Cardiac septum (tissue), 1 donor: ENCODE measurements at regions of chr16 and their contacts with region 1.

Region 1: DNA sequence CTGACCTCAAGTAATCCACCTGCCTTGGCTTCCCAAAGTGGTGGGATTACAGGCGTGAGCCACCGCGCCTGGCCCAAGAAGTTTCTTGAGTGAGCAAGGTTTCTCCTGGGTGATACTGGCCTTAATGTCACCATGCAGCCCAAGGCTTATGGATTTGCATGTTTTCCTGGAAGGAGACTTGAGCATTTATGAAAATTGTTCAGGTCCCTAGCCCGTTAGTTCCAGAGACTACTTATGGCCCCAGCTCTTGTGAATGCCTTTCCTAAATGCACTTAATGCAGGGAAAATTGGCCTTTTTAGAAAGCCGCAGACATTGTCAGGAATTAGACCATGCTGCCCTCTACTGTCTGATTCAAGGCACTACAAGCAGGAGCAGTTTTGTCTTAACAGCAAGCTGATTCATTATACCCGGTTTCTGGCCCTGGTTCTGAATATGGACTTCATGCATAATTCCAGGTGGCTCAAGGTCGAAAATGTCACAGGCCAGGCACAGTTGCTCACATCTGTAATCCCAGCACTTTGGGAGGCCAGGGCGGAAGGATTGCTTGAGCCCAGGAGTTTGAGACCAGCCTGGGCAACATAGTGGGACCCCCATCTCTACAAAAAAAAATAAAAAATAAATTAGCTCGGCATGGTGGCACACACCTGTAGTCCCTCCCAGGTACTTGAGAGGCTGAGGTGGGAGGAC is 91.3 kb downstream of the SNX29 start:
- DNase-seq: no peak

Region 2: DNA sequence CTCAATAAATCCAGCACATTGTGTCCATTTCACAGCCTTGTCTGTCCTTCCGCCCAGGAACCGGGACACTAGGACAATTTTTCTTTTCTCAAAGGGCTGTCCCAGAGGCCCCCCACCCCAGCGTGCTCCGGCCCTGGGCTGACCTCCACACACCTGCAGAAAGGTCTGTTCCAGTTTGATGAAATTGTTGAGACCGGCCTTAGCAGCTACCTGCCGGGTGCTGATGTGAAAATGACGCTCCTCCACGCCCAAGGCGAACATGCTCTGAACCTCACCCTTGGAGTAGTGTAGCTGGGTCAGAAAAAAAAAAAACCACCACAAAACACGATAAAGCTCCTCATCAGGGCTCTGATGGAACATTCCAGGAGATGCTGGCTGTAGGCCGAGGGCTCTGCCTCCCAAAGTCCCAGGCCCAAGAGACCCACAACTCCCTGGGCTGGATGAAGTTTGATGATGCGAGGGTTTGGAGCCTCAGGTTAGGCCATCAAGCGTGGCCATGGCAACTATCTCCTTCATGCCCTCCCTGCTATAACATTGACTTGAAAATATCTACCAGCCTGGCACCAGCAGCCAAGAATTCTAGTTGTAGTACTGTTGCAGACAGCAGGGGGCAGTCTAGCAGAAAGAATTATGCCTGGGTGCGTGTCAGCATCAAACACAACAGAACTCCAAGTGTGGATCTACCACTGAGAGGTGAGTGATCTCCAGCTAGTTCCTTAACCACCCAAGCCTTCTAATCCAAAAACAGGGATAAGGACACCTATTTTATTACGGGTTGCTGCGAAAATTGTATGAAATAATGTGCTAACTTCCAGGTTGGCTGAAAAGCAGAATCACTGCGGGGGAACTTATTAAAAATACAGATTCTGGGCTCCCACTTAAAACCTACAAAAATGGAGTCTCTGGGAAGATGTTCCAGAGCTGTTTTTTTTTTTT is 660.5 kb before region 1 on chr16:
- intact Hi-C with region 1: loop called (anchors 10 kb)
- DNase-seq: no peak

Region 3: DNA sequence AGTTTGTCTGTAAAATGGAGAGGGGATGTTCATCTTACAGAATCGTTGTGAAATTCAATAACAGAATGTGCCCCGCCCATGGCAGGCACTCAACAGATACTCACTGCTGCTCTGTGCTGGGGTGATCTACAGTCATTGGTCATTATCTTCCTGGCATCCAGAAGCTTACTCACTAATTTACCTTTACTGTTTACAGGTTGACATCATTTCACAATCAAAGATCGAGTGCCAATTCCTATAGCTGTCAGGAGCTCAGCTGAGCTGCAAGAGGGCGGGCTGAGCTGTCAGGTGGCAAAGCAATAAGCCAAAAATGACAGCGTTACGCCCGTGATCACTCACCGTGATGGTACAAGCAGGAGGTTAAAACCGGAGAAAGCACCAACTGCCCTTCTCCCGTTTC is 532.4 kb before region 1 on chr16:
- intact Hi-C with region 1: no loop called
- DNase-seq: no peak

Region 4: DNA sequence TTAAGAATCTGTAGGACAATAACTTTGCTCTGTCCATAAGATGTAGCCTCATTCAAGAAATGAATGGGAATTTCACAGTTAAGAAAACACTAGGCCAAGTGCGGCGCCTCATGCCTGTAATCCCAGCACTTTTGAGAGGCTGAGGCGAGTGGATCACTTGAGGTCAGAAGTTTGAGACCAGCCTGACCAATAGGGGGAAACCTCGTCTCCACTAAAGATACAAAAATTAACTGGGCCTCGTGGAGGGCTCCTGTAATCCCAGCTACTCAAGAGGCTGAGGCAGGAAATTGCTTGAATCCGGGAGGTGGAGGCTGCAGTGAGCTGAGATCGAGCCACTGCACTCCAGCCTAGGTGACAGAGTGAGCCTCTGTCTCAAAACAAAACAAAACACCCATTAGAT is 196.7 kb before region 1 on chr16:
- intact Hi-C with region 1: loop called (anchors 10 kb)
- DNase-seq: no peak

Region 5: GRCh38 chr16:11950388-11950787 is 117.5 kb before region 1 on chr16:
- intact Hi-C with region 1: loop called (anchors 5 kb)
- DNase-seq: no peak

Region 6: DNA sequence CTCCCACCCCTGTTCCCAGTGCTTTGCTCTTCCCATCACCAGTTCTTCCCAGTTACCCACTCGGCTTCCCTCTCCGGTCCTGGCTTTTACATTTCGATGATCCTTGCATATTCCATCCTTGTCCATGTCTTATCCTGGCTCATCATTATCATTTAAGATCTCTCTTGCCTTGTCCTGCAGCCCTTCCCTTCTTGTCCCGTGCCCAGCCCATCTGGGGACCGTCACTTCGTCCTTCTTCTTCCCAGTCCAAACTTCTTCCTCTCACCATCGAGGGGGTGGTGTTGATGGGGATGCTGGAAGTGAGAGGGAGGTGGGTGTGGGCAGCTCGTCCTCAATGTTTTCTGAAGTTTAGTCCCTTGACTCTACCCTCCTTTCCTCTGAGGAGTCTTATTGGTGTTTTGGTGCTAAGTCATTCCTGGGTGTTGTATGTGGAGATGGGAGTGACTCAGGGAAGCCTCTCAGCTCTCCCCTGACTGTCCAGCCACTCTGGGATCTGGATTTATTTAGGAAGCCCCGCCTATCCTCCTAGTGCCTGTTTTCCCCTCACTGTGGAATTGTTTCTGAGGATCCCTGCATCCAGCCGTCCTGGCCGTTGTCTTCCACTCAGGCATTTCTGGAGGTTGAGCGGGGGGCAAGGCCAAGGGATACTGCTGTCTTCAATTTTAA is 90.3 kb before region 1 on chr16:
- intact Hi-C with region 1: loop called (anchors 5 kb)
- DNase-seq: no peak

Region 7: DNA sequence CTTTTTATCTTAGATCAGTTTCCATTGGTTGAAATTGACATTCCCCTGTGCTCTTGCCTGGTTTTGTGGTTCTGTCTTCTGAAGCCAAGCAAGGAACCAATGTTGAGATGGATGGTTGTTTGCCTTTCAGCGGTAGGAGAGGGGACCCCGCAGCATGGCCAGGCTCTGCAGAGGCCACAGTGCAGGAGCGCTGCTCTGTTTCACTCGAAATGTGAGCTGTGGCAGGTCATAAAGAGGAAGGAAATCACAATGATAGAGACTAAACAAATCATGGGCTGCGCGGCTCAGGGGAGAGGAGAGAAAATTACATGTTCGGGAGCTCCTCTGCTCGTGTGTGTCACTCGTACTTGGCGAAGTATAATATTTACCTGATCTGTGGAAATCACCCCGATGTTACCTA is 56.9 kb after region 1 on chr16:
- intact Hi-C with region 1: no loop called
- DNase-seq: no peak

Region 8: DNA sequence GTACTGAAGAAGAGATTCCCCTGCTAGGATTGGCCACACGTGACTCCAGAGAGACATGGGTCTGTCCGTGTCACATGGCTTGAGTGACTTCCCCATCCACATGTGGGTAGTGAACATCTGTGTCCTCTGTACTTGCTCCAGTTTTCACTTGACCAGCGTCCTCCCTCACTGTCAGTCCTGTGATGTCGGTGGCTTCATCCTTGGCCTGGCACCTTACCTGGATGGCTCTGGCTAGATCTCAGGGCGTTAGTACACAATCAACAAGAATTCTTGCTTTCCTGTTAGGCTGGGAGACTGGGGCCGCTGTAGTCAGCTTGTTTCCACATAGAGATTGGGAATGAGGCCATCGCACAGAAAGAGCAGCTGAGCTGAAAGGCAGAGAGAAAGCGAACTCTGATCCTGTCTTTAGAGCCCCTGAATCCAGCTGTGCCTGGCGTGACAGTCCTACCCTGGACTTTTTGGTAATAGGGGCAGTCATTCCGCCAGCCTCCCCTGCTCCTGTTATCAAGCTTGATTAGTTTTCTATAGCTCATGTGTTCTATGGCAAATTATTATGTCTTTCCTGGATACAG is 136.0 kb after region 1 on chr16:
- intact Hi-C with region 1: no loop called
- DNase-seq: no peak

Region 9: GRCh38 chr16:12271006-12271405 is 203.1 kb after region 1 on chr16:
- intact Hi-C with region 1: no loop called
- DNase-seq: no peak